ENCODE measurements at regions of chr12 and their contacts with region 1.

Region 1: DNA sequence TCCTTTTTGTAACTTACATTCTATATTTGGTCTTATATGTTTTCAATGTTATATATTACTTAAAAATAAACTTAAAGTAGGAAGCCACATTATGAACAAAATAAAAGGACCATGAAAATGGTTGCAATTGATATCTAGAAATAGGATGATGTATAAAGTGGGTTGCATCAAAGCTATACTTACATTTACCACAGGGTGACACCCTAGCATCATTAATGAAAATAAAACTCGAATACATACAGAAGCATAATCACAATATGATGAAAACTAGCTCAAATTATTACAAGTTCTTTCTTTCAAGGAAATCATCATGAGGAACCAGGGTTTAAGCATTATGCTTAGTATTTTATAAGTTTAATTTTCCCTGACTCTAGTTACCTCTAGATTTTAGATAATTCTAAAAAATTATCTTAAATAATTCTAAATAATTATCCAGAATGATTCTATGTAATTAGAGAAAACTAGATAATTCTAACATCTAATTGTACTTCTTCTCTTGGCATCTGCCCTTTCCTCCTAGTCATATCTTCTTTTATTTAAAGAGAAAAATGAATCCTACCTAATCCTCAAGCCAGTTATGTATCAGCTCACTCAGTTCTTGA is 31.2 kb downstream of the TAS2R7 start:
- DNase-seq: no peak
- H3K4me3 ChIP-seq: no peak overlapping the region
- H3K27ac ChIP-seq: no peak overlapping the region
- H3K4me1 ChIP-seq: no peaks in the 10 kb centered on the region
- H3K27me3 ChIP-seq: peaks cover 20% of the 10 kb centered on the region; the same call in 1 of the 2 replicates
- CTCF ChIP-seq: peak; percentile 85

Region 2: GRCh38 chr12:11171145-11171968 is 400.1 kb after region 1 on chr12 and contains the start of gene SMIM10L1:
- CTCF ChIA-PET with region 1: no interaction called
- POLR2A ChIA-PET with region 1: interaction called, 10 read pairs
- intact Hi-C with region 1: no loop called
- DNase-seq: peak; percentile 79 to 88
- H3K4me3 ChIP-seq: peak within 1 kb of the TSS; percentile 75
- H3K27ac ChIP-seq: peak within 1 kb of the TSS; percentile 73
- H3K4me1 ChIP-seq: peaks cover 8% of the 10 kb centered on the region; the same call in 1 of the 2 replicates
- H3K27me3 ChIP-seq: no peaks in the 10 kb centered on the region
- CTCF ChIP-seq: no peak
- total RNA-seq, gene SMIM10L1: 7.9 and 10.8 TPM in 2 replicates

Region 3: GRCh38 chr12:11202811-11203210 is 431.6 kb after region 1 on chr12:
- CTCF ChIA-PET with region 1: interaction called, 18 read pairs
- POLR2A ChIA-PET with region 1: no interaction called
- intact Hi-C with region 1: loop called (anchors 1 kb)
- DNase-seq: no peak
- H3K4me3 ChIP-seq: no peak overlapping the region
- H3K27ac ChIP-seq: no peak overlapping the region
- H3K4me1 ChIP-seq: no peaks in the 10 kb centered on the region
- H3K27me3 ChIP-seq: no peaks in the 10 kb centered on the region
- CTCF ChIP-seq: no peak

Region 4: DNA sequence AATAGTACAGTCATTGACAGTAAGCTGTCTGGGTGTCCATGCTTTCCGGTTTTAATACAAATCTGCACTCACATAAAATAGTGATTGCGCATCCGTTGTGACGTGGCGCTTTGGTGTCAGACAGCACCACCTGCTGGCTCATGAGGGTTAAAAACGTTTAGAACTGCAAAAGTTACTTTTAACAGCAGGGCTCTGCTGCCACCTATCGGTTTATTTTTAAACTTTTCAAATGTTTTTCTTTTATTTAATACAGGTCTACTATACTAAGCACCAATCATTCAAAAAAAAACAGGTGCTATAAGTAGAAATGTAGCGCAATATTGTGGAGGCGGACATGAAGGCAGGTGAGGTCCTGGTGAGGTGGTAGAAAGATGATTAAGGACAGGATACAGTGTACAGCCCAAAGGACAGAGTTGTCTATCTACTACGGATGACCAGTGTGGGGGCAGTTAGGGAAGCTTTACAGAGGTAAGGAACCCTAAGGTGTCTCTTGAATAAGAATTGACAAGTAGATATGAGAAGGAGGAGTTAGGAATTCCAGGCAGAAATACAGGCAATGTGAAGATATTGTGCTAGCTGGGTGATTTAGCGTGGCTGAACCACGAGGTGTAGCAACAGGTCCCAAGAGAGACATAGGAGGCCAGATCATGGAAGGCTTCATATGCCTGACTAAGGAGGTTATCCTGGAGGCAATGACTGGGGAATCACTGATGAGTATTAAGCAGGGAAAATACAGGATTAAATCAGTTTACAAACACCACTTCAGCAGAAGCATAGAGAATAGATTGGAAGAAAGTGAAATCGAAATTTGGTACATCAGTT is 715.6 kb after region 1 on chr12:
- CTCF ChIA-PET with region 1: interaction called, 13 read pairs
- POLR2A ChIA-PET with region 1: no interaction called
- intact Hi-C with region 1: loop called (anchors 1 kb)
- DNase-seq: peak; percentile 66 to 71
- H3K4me3 ChIP-seq: no peak overlapping the region
- H3K27ac ChIP-seq: no peak overlapping the region
- H3K4me1 ChIP-seq: peaks cover 12% of the 10 kb centered on the region
- H3K27me3 ChIP-seq: no peaks in the 10 kb centered on the region
- CTCF ChIP-seq: peak; percentile 99

Region 5: DNA sequence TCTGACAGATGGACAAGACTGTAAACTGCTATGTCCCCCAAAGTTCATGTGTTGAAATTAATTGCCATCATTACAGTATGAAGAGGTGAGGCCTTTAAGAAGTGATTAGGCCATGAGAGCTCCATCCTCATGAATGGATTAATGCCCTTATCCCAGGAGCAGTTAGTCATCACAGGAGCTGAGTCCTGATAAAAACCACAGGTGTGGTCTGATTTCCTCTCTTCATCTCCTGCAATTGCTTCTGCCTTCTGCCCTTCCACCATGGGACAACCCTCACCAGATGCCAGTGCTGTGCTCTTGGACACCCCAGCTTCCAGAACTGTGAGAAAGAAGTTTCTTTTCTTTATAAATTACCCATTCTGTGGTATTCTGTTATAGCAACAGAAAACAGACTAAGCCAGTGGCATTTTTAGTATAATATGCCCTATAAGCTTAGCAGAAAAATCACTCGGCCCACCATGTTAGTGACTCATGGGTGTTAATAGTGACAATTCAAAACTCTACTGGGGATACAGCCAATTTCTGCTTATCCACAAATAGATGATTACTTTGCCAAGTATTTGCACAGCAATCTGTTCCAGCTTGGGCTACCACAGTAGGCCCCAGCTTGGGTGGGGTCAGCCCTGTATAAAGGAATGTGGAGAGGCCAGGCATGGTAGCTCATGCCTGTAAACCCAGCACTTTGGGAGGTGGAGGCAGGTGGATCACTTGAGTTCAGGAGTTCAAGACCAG is 1170.5 kb after region 1 on chr12:
- CTCF ChIA-PET with region 1: no interaction called
- POLR2A ChIA-PET with region 1: interaction called, 16 read pairs
- intact Hi-C with region 1: no loop called
- DNase-seq: peak; percentile 76 to 86
- H3K4me3 ChIP-seq: no peak overlapping the region
- H3K27ac ChIP-seq: peak overlapping the region; percentile 83
- H3K4me1 ChIP-seq: peaks cover 22% of the 10 kb centered on the region
- H3K27me3 ChIP-seq: no peaks in the 10 kb centered on the region
- CTCF ChIP-seq: no peak

Measured in PC-9 (cell line).